Calu3 (cell line): ENCODE measurements at regions of chr10 and their contacts with region 1.

Region 1: DNA sequence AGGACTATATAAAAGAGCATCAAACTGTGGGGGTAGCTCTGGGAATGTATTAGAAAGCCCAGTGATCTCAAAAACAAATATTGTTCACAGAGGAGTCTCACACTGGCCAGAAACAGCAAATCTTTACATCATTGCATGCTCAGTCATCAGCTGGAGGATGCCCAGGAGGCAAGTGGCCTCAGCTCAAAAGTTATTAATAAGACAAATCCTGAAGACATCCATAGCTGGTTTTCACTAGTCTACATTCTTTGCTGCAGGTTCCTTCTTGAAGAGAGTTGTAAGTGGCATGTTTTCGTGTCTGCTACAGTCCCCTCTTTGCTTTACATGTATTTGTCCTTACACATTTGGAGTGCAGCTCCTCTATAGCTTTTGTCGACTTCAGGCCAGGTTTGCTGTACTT is 8.6 kb upstream of the CCDC7 start:
- DNase-seq: no peak
- H3K4me3 Mint-ChIP-seq: no peak overlapping the region
- H3K27ac Mint-ChIP-seq: no peak overlapping the region
- H3K4me1 Mint-ChIP-seq: no peaks in the 10 kb centered on the region
- H3K27me3 Mint-ChIP-seq: peaks cover 42% of the 10 kb centered on the region
- CTCF ChIP-seq: no peak

Region 2: GRCh38 chr10:32190890-32191491 is 246.3 kb before region 1 on chr10:
- CTCF ChIA-PET with region 1: no interaction called
- intact Hi-C with region 1: no loop called
- DNase-seq: no peak
- H3K4me3 Mint-ChIP-seq: no peak overlapping the region
- H3K27ac Mint-ChIP-seq: no peak overlapping the region
- H3K4me1 Mint-ChIP-seq: peaks cover 17% of the 10 kb centered on the region
- H3K27me3 Mint-ChIP-seq: no peaks in the 10 kb centered on the region
- CTCF ChIP-seq: peak; percentile 47

Region 3: DNA sequence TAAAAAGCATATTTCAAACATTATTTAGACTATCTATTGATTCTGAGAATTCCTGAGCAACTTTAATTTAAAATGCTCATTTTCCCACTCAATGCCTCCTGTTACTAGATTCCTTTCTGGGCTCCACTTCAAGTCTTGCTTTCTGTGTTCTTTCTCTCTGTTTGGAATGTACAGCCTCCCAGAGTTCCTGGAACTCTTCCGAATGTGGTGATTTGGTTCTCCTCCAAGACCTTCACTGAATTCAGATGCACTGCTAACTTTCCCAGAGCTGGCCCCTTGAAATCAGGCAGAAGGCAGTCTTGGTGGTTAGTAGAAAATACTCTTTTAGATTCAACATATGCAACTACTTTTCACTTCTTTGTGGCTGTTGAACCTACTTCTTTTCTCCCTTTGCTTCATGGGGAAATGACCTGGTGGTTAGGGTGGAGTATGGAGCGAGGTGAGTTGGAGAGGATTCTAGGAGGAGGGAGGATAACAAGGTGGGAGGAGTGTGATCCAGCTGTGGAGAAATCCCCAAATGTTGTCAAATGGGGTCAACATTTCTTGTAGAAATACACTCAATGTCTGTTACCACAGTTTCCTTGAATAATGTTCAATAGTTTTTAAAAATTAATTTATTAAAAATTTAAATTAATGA is 19.3 kb before region 1 on chr10:
- CTCF ChIA-PET with region 1: no interaction called
- intact Hi-C with region 1: no loop called
- DNase-seq: no peak
- H3K4me3 Mint-ChIP-seq: no peak overlapping the region
- H3K27ac Mint-ChIP-seq: no peak overlapping the region
- H3K4me1 Mint-ChIP-seq: peaks cover 7% of the 10 kb centered on the region
- H3K27me3 Mint-ChIP-seq: no peaks in the 10 kb centered on the region
- CTCF ChIP-seq: no peak

Region 4: GRCh38 chr10:32459051-32459698 is 21.8 kb after region 1 on chr10:
- CTCF ChIA-PET with region 1: interaction called, 11 read pairs
- intact Hi-C with region 1: no loop called
- DNase-seq: no peak
- H3K4me3 Mint-ChIP-seq: no peak overlapping the region
- H3K27ac Mint-ChIP-seq: no peak overlapping the region
- H3K4me1 Mint-ChIP-seq: no peaks in the 10 kb centered on the region
- H3K27me3 Mint-ChIP-seq: no peaks in the 10 kb centered on the region
- CTCF ChIP-seq: no peak